ENCODE measurements at regions of chr17 and their contacts with region 1.

Region 1: GRCh38 chr17:80347948-80348351 is 67.0 kb upstream of the ENDOV start:
- DNase-seq: no peak
- ATAC-seq: no peak
- H3K4me3 ChIP-seq: no peak overlapping the region
- H3K27ac ChIP-seq: no peak overlapping the region
- H3K4me1 ChIP-seq: no peaks in the 10 kb centered on the region
- H3K27me3 ChIP-seq: no peaks in the 10 kb centered on the region
- CTCF ChIP-seq: no peak
- POLR2A ChIP-seq: no peak

Region 2: GRCh38 chr17:80364216-80364618 is 16.3 kb after region 1 on chr17:
- in situ Hi-C with region 1: no loop called
- intact Hi-C with region 1: loop called (anchors 2 kb)
- DNase-seq: no peak
- ATAC-seq: no peak
- H3K4me3 ChIP-seq: no peak overlapping the region
- H3K27ac ChIP-seq: no peak overlapping the region
- H3K4me1 ChIP-seq: no peaks in the 10 kb centered on the region
- H3K27me3 ChIP-seq: no peaks in the 10 kb centered on the region
- CTCF ChIP-seq: peak in 1 of 5 experiments; percentile 19
- POLR2A ChIP-seq: no peak

Region 3: DNA sequence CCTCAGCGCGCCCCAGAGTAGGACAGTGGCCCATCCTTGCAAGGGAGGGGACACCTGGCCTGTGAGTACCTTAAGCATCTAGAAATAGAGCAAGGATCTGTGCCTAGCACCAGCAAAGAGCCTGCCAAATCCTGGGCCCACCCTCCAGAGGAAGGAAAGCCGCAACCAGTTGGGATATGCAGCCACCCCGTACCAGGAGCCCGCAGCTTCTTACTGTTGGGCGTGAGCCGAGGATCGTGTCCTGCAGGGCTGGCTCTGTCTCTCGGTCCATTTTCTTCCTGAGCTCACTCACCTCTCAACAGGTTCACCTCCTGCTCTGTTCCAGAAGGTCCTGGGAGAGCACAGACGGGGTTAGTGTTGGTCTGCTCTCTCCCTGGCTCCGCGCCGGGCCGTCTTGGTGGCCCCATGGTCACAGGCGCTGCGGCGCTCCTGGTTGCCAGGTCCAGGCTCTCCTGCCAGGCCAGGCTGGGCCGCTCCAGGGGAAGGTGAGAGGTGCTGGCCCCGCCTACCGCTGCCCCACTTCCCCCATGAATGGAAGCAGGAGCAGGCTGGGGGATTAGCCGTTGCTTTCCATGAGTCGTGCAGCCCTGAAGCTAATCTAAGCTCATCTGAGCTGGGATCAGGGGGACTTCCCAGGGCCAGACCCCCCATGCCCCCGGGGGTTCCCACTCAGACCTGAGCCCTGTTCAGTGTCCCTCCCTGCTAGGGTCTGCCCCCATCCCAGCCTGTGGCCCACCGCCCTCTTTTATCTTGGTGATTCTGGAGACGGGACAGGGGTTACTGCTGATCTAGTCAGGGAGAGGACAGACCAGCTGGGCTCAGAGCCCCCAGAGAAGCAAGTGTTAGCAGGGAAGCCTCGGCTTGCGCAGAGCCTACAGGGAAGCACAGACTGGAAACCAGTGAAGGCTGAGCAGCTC is 79.7 kb after region 1 on chr17:
- in situ Hi-C with region 1: no loop called
- intact Hi-C with region 1: no loop called
- DNase-seq: no peak
- ATAC-seq: no peak
- H3K4me3 ChIP-seq: no peak overlapping the region
- H3K27ac ChIP-seq: no peak overlapping the region
- H3K4me1 ChIP-seq: peaks cover 0 to 15% of the 10 kb centered on the region in 2 donors
- H3K27me3 ChIP-seq: no peaks in the 10 kb centered on the region
- CTCF ChIP-seq: no peak
- POLR2A ChIP-seq: no peak

Region 4: GRCh38 chr17:81453712-81454111 is 1105.8 kb after region 1 on chr17:
- in situ Hi-C with region 1: no loop called
- intact Hi-C with region 1: no loop called
- DNase-seq: no peak
- ATAC-seq: no peak
- H3K4me3 ChIP-seq: no peak overlapping the region
- H3K27ac ChIP-seq: no peak overlapping the region
- H3K4me1 ChIP-seq: no peaks in the 10 kb centered on the region
- H3K27me3 ChIP-seq: no peaks in the 10 kb centered on the region
- CTCF ChIP-seq: no peak
- POLR2A ChIP-seq: no peak

Measured in gastrocnemius medialis (tissue), 4 donors.